ENCODE measurements at regions of chr6 and their contacts with region 1.

Region 1: DNA sequence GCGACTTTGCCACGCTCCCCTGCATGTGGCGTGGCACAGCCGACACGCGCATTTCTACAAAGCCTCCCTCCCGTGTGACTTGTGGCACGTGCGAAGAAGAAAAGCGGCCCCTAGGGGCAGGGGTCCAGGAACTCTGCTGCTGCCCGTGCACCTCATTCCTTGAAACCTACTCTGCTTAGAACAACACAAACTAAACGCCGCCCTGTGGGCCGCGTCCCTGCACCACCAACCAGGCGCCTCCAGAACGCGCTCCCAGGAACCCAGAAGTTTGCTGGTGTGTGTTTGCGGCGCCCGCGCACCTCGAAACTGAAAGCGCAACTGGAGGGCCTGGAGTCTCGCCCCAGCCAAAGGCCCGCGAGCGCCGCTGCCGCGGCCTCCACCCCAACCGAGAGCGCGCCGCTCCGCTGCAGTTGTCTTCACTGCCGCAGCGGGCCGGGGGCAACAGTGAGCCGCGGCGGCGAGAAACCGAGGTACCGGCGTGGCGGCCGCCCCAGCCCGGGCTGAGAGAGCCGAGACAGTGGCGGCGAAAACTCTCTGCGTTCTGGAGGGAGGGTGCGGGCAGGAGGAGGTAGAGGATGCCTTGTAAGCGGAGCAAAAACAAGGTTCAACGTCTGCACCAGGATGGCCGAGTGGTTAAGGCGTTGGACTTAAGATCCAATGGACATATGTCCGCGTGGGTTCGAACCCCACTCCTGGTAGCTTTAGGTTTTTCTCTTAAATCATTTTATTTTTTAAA is 65.8 kb downstream of the STX11 start:
- DNase-seq: peak; percentile 95
- ATAC-seq: peak; percentile 90
- H3K4me3 Mint-ChIP-seq: peak overlapping the region; percentile 81
- H3K27ac Mint-ChIP-seq: peak overlapping the region; percentile 99
- H3K4me1 Mint-ChIP-seq: peaks cover 41% of the 10 kb centered on the region
- H3K27me3 Mint-ChIP-seq: peaks cover 2% of the 10 kb centered on the region

Region 2: DNA sequence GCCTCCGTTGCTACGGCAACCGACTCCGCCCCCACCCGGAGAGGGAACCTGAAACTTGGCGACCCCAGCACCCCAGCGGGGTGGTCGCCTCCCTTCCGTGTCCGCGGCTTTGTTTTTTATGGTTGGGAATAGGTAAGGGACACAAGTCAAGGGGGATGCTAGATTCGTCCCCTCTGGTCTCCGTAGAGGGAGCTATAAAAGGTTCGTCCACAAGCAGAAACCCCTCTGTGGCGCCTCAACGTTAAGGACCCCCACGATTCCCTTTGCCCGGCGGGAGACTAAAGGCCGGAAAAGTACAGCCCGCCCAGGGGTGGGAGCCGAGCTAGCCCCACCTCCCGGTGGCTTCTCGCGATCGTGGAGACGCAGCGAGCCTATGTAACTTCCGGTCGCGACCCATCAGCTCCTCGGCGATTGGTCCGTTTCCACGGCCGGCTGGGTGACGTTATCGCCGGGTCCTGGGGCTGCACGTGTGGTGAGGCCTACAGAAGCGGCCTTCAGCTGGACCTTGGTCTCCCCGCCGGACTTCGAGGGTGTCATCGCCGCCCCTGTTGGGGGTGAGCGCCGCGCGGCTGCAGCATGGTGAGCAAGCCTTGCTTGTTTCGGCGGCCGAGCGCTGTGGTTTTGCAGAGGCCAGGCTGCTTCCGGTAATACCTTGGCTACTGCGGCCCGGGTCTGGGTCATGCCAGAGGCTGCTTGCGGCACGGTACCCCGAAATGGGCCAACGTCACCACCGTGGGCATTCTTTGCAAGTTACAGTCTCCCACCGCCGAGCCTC is 373.0 kb before region 1 on chr6 and contains the start of gene LTV1:
- CTCF ChIA-PET with region 1: interaction called, 3 read pairs
- POLR2A ChIA-PET with region 1: no interaction called
- intact Hi-C with region 1: loop called in 1 of 2 experiments (anchors 2 kb)
- DNase-seq: peak; percentile 96
- ATAC-seq: peak; percentile 99
- H3K4me3 Mint-ChIP-seq: peak within 1 kb of the TSS; percentile 93
- H3K27ac Mint-ChIP-seq: peak within 1 kb of the TSS; percentile 96
- H3K4me1 Mint-ChIP-seq: peaks cover 34% of the 10 kb centered on the region
- H3K27me3 Mint-ChIP-seq: no peaks in the 10 kb centered on the region
- total RNA-seq, gene LTV1: 34.3 to 36.3 TPM

Region 3: DNA sequence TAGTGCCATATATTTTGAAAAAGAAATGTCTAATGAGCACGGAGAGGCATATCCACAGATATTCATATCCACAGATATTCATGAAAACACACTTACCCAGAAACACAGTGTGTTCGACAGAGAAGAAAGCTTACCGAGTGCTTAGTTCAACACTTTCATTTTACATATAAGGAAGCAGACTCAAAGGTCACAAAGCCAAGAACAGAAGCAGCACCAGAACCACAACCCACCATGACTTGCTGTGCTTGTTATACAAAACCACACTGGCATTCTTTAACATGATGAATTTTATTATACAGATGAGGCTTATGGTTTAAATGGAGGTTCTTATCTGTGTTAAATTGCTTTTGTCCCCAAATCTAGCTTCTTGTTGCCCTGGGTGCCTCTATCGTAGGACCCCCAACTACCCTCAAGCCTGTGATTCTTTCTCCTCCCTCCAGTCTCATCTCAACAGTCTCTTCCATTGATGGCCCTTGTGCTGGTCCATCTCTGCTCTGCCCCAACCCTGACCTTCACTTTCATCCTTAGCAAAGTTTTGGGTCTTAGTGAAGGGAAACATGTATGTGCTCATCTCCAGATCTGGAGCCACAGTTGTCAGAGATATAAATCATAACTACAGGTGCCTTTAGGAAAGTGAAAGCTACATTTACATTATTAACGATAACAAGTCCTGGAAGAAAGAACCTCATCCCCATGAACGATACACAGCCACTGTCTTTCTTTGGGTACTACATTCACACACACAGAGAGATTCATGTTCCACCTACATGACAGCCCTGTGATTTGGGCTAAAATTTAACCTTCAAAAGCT is 160.8 kb before region 1 on chr6:
- CTCF ChIA-PET with region 1: no interaction called
- POLR2A ChIA-PET with region 1: no interaction called
- intact Hi-C with region 1: no loop called
- DNase-seq: peak; percentile 74
- ATAC-seq: peak; percentile 85
- H3K4me3 Mint-ChIP-seq: peak overlapping the region; percentile 68
- H3K27ac Mint-ChIP-seq: peak overlapping the region; percentile 97
- H3K4me1 Mint-ChIP-seq: peaks cover 27% of the 10 kb centered on the region
- H3K27me3 Mint-ChIP-seq: no peaks in the 10 kb centered on the region

Region 4: DNA sequence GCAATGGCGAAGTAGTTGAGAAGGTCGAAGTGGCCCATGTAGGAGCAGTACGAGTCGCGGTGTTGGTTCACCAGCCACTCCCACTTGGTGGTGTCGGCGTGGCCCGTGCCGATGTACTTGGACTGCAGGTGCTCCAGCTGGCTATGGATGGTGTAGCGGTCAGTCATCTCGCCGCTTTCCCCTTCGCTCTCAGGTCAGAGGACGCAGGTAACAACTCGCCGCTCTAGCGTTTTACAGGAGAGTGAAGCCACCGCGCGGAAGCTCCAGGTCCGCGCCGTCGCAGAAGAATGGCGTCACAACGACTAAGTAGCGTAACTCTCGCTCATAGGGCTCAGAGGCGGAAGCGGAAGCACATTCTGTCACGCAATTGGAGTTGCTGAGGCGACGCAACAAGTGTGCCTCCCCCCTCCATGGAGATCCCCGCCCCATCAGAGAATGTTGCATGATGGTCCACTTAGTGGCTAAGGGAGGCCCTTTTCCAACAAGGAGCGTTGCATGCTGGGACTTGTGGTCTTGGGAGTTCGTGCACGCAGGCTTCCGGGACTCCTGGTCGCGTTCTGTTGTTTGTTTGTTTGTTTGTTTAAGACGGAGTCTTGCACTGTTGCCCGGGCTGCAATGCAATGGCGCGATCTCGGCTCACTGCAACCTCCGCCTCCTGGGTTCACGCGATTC is 120.6 kb before region 1 on chr6 and contains the start of gene SF3B5:
- CTCF ChIA-PET with region 1: interaction called, 23 read pairs
- POLR2A ChIA-PET with region 1: interaction called, 6 read pairs
- intact Hi-C with region 1: loop called (anchors 1 kb)
- DNase-seq: peak; percentile 98
- ATAC-seq: peak; percentile 97
- H3K4me3 Mint-ChIP-seq: peak within 1 kb of the TSS; percentile 84
- H3K27ac Mint-ChIP-seq: peak within 1 kb of the TSS; percentile 91
- H3K4me1 Mint-ChIP-seq: peaks cover 22% of the 10 kb centered on the region
- H3K27me3 Mint-ChIP-seq: no peaks in the 10 kb centered on the region
- total RNA-seq, gene SF3B5: 152 to 164 TPM

Region 5: GRCh38 chr6:144149891-144150709 is 66.0 kb before region 1 on chr6 and contains the start of gene STX11:
- CTCF ChIA-PET with region 1: interaction called, 3 read pairs
- POLR2A ChIA-PET with region 1: no interaction called
- intact Hi-C with region 1: loop called (anchors 1 kb)
- DNase-seq: peak; percentile 91
- ATAC-seq: peak; percentile 80
- H3K4me3 Mint-ChIP-seq: peak within 1 kb of the TSS; percentile 84
- H3K27ac Mint-ChIP-seq: peak within 1 kb of the TSS; percentile 95
- H3K4me1 Mint-ChIP-seq: peaks cover 41% of the 10 kb centered on the region
- H3K27me3 Mint-ChIP-seq: peaks cover 5% of the 10 kb centered on the region
- total RNA-seq, gene STX11: 19.6 to 20.9 TPM

Region 6: GRCh38 chr6:144284783-144285547 is 68.9 kb after region 1 on chr6 and contains the start of gene UTRN:
- CTCF ChIA-PET with region 1: interaction called, 3 read pairs
- POLR2A ChIA-PET with region 1: no interaction called
- intact Hi-C with region 1: loop called in 1 of 2 experiments (anchors 1 kb)
- DNase-seq: peak; percentile 71
- ATAC-seq: peak; percentile 75
- H3K4me3 Mint-ChIP-seq: peak within 1 kb of the TSS; percentile 88
- H3K27ac Mint-ChIP-seq: peak within 1 kb of the TSS; percentile 73
- H3K4me1 Mint-ChIP-seq: peaks cover 16% of the 10 kb centered on the region
- H3K27me3 Mint-ChIP-seq: peaks cover 37% of the 10 kb centered on the region
- total RNA-seq, gene UTRN: 43.4 to 46.2 TPM

Region 7: DNA sequence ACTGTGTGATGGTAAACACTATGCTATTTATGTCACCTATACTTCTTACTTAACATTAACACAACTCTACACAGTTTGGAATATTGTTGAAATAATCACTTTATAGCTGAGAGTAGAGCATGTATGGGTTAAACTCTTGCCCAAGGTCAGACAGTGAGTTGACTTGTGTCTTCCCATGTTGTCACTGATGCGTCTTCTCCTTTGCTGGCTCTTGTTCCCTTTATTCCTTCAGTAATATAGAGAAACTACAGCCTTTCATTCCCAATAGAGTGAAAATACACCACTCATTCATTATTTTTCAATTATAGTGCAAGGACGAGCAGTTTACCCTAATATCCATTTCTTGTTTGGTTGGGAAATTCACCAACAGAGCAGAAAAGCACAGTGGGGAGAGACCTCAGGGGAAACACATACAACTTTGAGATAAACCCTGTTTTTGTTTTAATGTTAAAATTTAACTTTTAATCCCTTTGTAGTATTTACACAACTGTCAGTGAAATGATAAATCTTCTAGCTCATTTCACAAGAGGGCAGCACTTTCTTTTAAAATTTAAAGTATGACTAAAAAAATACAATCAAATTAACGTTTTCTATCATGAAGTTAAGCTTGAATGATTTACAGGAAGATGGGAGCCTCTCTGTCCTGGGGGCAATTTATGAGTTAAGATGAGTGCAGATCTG is 432.0 kb after region 1 on chr6:
- CTCF ChIA-PET with region 1: no interaction called
- POLR2A ChIA-PET with region 1: no interaction called
- intact Hi-C with region 1: no loop called
- DNase-seq: no peak
- ATAC-seq: no peak
- H3K4me3 Mint-ChIP-seq: no peak overlapping the region
- H3K27ac Mint-ChIP-seq: no peak overlapping the region
- H3K4me1 Mint-ChIP-seq: peaks cover 6% of the 10 kb centered on the region
- H3K27me3 Mint-ChIP-seq: no peaks in the 10 kb centered on the region

Region 8: GRCh38 chr6:145003145-145003544 is 787.0 kb after region 1 on chr6:
- CTCF ChIA-PET with region 1: no interaction called
- POLR2A ChIA-PET with region 1: no interaction called
- intact Hi-C with region 1: no loop called
- DNase-seq: no peak
- ATAC-seq: no peak
- H3K4me3 Mint-ChIP-seq: no peak overlapping the region
- H3K27ac Mint-ChIP-seq: no peak overlapping the region
- H3K4me1 Mint-ChIP-seq: no peaks in the 10 kb centered on the region
- H3K27me3 Mint-ChIP-seq: peaks cover 23% of the 10 kb centered on the region

Region 9: DNA sequence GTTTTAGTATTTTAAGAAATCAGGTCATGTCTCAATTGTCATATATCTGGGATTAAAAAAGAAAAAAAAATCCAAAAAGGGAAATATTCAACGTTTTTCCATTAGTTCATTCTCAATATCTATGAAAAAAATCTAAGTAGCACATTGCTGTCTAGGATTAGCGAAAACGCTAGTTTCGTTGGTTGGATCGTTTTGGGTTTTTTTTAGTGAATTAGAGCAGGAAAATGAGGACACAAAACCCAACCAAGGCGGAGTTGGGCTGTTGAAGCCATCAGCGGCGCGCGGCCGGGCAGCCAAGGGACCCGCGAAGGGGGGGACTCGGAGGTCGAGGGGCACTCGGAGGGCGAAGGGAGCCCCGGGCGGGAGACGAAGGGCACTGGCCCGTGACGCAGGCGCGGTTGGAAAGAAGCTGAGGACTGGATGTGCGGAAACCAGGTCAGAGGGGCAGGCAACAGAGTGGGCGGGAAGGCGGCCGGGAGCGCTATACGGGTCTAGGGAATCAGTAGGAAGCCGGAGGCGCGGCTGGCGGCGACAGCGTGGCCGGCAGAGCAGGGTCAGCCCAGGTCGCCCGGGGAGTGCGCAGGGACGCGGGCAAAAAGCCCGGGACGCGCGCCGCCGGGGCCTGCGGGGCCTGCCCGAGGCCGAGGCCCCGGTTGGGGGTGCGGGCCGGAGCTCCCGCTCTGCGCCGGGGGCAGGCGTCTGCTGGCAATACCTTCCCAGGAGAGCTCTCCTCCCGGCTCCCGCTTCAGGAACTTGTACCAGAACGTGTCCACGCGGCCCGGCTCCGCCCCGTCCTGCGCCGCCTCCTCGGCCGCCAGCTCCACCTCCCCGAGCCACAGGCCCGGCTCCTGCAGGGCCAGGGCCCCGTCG is 1518.6 kb after region 1 on chr6:
- CTCF ChIA-PET with region 1: no interaction called
- POLR2A ChIA-PET with region 1: no interaction called
- intact Hi-C with region 1: loop called in 1 of 2 experiments (anchors 10 kb)
- DNase-seq: peak; percentile 82
- ATAC-seq: peak; percentile 70
- H3K4me3 Mint-ChIP-seq: peak overlapping the region; percentile 88
- H3K27ac Mint-ChIP-seq: peak overlapping the region; percentile 95
- H3K4me1 Mint-ChIP-seq: peaks cover 24% of the 10 kb centered on the region
- H3K27me3 Mint-ChIP-seq: no peaks in the 10 kb centered on the region